ENCODE measurements at regions of chr1 and their contacts with region 1.

Region 1: GRCh38 chr1:168428063-168428731 is 115.6 kb downstream of the XCL2 start:
- DNase-seq: peak in 4 of 5 donors; percentile 28 to 66 (median 46)
- ATAC-seq: peak; percentile 67 to 81 (median 74)
- H3K4me3 ChIP-seq: no peak overlapping the region
- H3K27ac ChIP-seq: peak overlapping the region; percentile 26 to 77 (median 54)
- H3K4me1 ChIP-seq: peaks cover 5 to 47% (median 26%) of the 10 kb centered on the region in 12 donors
- H3K27me3 ChIP-seq: no peaks in the 10 kb centered on the region
- CTCF ChIP-seq: no peak
- POLR2A ChIP-seq: no peak

Region 2: GRCh38 chr1:168408536-168409242 is 19.5 kb before region 1 on chr1:
- intact Hi-C with region 1: loop called in 1 of 10 experiments (anchors 2 kb)
- DNase-seq: no peak
- ATAC-seq: no peak
- H3K4me3 ChIP-seq: no peak overlapping the region
- H3K27ac ChIP-seq: peak overlapping the region in 1 of 12 donors; percentile 13
- H3K4me1 ChIP-seq: peaks cover 0 to 12% (median 0%) of the 10 kb centered on the region in 12 donors
- H3K27me3 ChIP-seq: no peaks in the 10 kb centered on the region
- CTCF ChIP-seq: no peak
- POLR2A ChIP-seq: no peak

Measured in heart left ventricle (tissue), 16 donors.